HEK293T (cell line): ENCODE measurements at regions of chr6 and their contacts with region 1.

Region 1: GRCh38 chr6:87066449-87067333 is 28.2 kb downstream of the CGA start:
- DNase-seq: peak; percentile 58

Region 2: DNA sequence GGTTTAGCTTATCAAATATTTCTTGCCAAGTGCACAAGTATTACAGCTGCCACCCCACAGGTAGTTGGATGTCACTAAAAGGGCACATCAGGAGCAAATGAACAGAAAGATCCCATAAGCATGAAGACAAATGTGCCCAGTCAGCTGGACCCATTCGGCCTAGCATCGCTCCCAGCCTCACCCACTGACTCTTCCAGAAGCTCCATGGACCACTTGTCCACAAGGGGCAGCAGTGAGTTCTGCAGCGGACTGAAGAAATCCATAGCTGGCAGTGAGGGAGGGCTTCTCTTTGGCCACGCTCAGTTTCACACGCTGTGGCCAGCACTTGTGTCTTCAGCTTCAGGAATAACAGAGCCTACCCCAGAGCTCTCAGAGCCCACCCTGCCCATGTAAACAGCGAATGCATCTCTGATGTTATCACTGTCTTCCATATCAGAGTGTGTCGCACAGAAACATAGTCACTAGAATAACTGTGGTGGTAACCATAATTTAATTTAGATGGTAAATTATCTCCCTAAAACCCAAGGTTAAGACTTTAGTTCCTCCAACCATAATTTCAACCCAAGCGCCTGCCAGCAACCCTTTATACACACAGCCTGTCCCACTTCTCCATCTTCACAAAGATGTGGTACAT is 12.4 kb after region 1 on chr6:
- CTCF ChIA-PET with region 1: interaction called, 13 read pairs
- POLR2A ChIA-PET with region 1: no interaction called
- DNase-seq: peak; percentile 87

Region 3: DNA sequence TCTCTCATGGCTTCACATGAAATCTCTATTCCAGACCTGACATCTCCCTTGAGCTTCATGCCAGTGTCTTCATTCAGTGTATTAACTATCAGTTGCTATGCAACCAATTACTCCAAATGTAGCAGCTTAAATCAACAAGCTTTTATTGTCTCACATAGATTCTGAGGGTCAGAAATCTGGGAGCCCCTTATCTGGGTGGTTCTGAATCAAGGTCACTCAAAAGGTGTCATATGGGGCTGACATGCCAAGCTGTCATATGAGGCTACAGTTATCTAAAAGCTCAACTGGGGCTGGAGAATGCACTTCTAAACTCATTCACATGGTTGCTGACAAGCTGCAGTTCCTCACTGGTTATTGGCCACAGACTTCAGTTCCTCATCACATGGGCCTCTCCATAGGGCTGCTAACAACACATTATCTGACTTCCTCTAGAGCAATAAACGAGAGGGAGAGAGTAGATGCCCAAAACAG is 35.5 kb after region 1 on chr6:
- CTCF ChIA-PET with region 1: no interaction called
- POLR2A ChIA-PET with region 1: no interaction called
- DNase-seq: no peak

Region 4: GRCh38 chr6:87494761-87495422 is 428.2 kb after region 1 on chr6:
- CTCF ChIA-PET with region 1: interaction called, 11 read pairs
- POLR2A ChIA-PET with region 1: no interaction called
- DNase-seq: no peak

Region 5: DNA sequence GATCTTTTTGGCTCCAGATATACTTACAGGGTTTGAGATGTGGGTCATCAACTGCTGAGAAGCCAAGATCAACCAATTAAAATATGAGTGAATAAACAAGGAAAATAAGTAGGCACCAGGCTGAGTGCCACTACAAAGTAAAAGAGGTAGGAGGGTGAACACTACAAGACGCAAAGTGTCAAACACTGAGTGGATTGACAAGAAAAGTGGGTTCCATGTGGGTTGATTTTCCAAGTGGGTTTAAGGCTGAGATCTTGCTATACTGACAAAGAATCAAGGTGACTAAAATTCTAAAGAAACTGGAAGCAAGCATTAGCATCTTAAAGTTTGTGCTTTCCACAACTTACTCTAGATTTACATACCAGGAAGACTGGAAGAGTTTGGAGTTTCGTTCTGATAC is 820.6 kb after region 1 on chr6:
- CTCF ChIA-PET with region 1: no interaction called
- POLR2A ChIA-PET with region 1: no interaction called
- DNase-seq: no peak